GM13976 (cell line): ENCODE measurements at regions of chr13 and their contacts with region 1.

Region 1: GRCh38 chr13:76016799-76017400 is 380.8 kb downstream of the LMO7 start:
- DNase-seq: peak; percentile 16
- CTCF ChIP-seq: peak; percentile 57

Region 2: DNA sequence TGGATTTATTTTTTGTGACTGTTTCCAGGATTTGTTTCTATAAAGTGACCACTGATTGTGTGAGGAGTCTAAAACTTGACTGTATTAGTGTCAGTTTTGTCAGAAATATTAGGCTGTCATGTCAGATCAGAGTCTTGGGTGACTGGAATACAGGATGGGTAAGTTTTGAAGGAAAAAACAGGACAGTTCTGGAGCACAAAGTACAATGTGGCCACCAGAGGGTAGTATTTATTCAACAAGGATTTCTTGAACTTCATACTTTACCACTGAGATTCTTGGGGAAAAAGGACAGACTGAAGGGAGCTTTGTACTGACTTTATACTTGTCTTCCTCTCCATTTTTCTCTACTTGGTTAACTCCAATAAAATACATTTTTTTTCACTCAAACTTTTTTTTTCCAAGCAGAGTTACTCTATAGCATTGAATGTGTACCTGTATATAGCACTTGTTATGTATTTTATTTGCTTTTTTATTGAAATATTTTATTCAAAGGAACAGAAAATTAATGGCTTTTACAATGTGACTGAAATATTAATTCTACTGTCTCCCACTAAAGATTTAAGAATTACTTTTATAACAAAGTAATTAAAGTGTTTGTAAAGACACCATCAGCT is 329.6 kb before region 1 on chr13:
- in situ Hi-C with region 1: loop called (anchors 10 kb)
- DNase-seq: no peak
- CTCF ChIP-seq: peak; percentile 11

Region 3: DNA sequence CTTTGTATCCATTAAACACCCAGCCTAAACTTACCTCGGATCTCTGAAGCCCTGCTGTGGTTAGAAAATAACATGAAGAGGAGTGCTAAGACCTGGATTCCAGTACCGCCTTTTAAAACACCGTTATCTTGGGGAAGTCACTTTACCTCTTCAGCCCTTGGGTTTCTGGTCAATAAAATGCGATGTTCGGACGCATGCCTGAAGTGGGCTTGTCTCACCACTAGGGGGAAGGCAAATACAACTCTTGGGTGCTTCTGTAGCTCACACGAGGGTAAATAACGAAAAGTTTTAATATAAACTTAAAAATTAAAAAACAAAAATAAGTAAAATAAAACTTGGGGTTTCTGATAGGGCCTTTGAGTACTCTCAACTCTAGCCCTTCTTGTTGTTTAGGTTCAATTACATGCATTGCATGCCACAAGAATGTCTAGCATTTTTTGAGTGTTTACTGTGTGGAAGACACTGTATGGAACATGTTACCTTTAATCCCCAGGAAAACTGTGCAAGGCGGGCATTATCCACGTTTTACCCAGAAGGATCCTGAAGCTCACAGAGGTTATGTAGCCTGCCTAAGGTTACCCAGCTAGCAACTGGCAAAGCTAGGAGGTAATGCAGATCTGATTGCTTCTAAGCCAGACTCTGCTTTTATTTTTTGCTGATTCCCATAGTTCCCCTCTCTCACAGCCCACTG is 140.4 kb before region 1 on chr13:
- in situ Hi-C with region 1: loop called (anchors 10 kb)
- DNase-seq: peak; percentile 54
- CTCF ChIP-seq: peak; percentile 87

Region 4: GRCh38 chr13:76903544-76904162 is 886.8 kb after region 1 on chr13:
- in situ Hi-C with region 1: loop called (anchors 25 kb)
- DNase-seq: peak; percentile 60
- CTCF ChIP-seq: peak; percentile 95